ENCODE measurements at regions of chr1 and their contacts with region 1.

Region 1: GRCh38 chr1:37859507-37860345 is at the start of gene MTF1:
- DNase-seq: peak; percentile 95
- H3K4me3 ChIP-seq: peak within 1 kb of the TSS; percentile 91
- CTCF ChIP-seq: peak; percentile 91

Region 2: GRCh38 chr1:37890378-37891014 is 30.8 kb after region 1 on chr1:
- in situ Hi-C with region 1: loop called (anchors 5 kb)
- DNase-seq: peak; percentile 23
- H3K4me3 ChIP-seq: no peak overlapping the region
- CTCF ChIP-seq: peak; percentile 35

Measured in astrocyte of the cerebellum (primary cell).